ENCODE measurements at regions of chr7 and their contacts with region 1.

Region 1: GRCh38 chr7:85890244-85890811 is 703.5 kb upstream of the SEMA3D start:
- DNase-seq: no peak
- ATAC-seq: peak in 3 of 4 donors; percentile 72 to 75 (median 72)
- H3K4me3 ChIP-seq: no peak overlapping the region
- H3K27ac ChIP-seq: no peak overlapping the region
- H3K4me1 ChIP-seq: no peaks in the 10 kb centered on the region
- H3K27me3 ChIP-seq: no peaks in the 10 kb centered on the region
- CTCF ChIP-seq: peak in 3 of 4 donors; percentile 19 to 47 (median 34)

Region 2: GRCh38 chr7:85875398-85875797 is 14.9 kb before region 1 on chr7:
- intact Hi-C with region 1: no loop called
- DNase-seq: no peak
- ATAC-seq: no peak
- H3K4me3 ChIP-seq: no peak overlapping the region
- H3K27ac ChIP-seq: no peak overlapping the region
- H3K4me1 ChIP-seq: no peaks in the 10 kb centered on the region
- H3K27me3 ChIP-seq: no peaks in the 10 kb centered on the region
- CTCF ChIP-seq: no peak

Region 3: DNA sequence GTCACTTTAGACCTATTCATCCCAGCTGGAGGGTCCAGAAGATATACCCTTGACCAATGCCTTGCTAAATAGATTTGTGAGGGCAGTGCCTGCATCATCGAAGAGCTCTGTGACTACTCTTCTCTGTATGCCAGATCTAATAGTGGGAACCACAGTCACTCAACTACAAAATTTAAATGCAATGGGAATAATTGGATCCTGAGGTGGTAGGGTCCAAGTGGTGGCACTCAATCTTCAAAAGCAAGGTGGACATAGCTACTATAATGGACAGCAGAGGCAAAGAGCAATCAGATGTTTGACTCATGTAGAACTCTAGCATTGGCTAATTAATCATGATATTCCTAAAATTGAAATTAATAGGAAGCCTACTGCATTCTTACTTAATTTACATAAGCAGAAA is 199.1 kb after region 1 on chr7:
- intact Hi-C with region 1: no loop called
- DNase-seq: no peak
- ATAC-seq: no peak
- H3K4me3 ChIP-seq: no peak overlapping the region
- H3K27ac ChIP-seq: no peak overlapping the region
- H3K4me1 ChIP-seq: no peaks in the 10 kb centered on the region
- H3K27me3 ChIP-seq: no peaks in the 10 kb centered on the region
- CTCF ChIP-seq: no peak

Region 4: DNA sequence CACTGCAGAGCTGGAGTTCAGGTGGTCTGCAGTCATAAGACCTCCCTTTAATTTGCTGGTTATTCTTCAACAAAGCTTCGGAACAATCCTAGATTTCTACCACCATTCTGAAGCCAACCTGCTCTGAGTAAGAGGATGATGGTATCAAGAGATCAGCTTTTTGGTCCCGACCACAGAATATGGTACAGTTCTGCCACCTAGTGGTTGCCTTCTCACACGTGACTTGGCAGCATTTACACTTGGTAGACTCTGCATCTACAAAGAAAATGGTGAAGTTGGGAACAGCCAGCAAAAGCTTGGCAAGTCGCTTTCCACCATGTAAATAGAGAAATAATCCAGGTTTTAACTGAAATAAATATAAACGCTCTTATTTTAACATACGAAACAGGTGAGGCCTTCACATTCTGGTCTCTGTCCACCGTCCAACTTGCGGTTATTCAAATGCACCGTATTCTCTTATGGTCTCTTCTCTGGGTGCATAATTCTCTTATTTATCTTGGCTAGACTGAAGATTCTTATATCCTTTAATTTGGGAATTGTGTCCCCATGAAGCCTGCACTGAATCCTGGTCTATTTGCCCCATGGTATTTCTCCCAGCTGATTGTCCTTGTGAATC is 579.5 kb after region 1 on chr7:
- intact Hi-C with region 1: loop called in 1 of 3 experiments (anchors 5 kb)
- DNase-seq: peak in 4 of 6 donors; percentile 35 to 71 (median 50)
- ATAC-seq: peak; percentile 76 to 94 (median 94)
- H3K4me3 ChIP-seq: no peak overlapping the region
- H3K27ac ChIP-seq: no peak overlapping the region
- H3K4me1 ChIP-seq: no peaks in the 10 kb centered on the region
- H3K27me3 ChIP-seq: no peaks in the 10 kb centered on the region
- CTCF ChIP-seq: peak; percentile 21 to 61 (median 50)